ENCODE measurements at regions of chr20 and their contacts with region 1.

Region 1: DNA sequence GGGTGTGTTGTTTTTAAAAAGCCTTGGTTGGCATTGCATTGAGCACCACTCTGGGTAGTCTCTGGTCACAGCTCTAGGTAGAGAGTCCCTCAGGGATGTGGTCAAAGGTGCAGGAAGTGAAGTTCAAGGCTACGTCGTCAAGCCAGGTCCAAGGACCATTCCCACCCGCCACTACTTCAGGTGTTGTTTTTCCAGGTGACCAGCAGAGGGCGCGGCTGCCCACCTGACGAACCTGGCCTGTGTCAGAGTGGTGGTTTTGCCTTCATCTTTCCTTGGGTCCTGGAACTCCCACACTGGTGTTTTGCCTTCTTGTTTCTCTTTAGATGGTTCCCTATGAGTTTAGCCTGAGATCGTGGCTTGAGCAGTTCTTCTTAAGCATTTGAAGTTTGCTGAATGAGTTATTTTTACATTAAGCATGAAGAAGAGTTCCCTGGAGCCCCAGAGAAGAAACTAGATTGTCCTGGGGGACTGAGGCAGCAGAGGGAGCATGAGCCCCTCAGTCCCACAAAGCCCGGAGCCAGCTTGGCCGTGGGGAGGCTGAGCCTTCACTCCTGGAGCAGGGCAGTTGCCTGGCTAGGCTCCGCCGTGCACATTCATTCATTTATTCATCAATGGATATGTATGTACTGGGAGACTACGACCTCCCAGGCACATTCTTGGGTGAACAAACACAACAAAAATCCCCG is 5.6 kb upstream of the PHACTR3 start:
- DNase-seq: peak; percentile 48
- H3K4me3 Mint-ChIP-seq: no peak overlapping the region
- H3K27ac Mint-ChIP-seq: no peak overlapping the region
- H3K4me1 Mint-ChIP-seq: no peaks in the 10 kb centered on the region
- H3K27me3 Mint-ChIP-seq: peaks cover 41% of the 10 kb centered on the region

Region 2: DNA sequence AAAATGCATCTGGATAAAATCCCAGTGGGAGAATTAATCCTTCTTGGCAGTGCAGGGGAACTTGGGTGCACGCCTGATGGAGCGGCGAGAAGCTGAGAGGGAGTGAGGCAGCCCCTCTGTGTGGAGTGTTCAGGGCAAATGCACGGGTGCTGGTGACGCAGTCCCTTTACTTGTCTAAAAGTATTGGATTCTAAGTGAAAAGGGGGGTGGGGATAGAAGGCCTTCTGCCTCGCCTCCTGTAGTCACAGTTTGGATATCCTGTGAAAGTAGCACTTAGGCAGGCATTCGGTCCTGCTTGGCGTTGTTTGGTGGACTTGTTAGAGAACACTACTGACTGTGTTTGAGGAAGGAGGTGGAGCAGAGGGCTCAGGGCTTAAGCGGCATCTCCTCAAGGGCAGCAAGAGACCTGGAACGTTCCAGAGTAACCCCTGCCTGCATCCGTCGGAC is 44.9 kb after region 1 on chr20:
- CTCF ChIA-PET with region 1: no interaction called
- POLR2A ChIA-PET with region 1: no interaction called
- intact Hi-C with region 1: no loop called
- DNase-seq: no peak
- H3K4me3 Mint-ChIP-seq: no peak overlapping the region
- H3K27ac Mint-ChIP-seq: no peak overlapping the region
- H3K4me1 Mint-ChIP-seq: no peaks in the 10 kb centered on the region
- H3K27me3 Mint-ChIP-seq: no peaks in the 10 kb centered on the region

Region 3: DNA sequence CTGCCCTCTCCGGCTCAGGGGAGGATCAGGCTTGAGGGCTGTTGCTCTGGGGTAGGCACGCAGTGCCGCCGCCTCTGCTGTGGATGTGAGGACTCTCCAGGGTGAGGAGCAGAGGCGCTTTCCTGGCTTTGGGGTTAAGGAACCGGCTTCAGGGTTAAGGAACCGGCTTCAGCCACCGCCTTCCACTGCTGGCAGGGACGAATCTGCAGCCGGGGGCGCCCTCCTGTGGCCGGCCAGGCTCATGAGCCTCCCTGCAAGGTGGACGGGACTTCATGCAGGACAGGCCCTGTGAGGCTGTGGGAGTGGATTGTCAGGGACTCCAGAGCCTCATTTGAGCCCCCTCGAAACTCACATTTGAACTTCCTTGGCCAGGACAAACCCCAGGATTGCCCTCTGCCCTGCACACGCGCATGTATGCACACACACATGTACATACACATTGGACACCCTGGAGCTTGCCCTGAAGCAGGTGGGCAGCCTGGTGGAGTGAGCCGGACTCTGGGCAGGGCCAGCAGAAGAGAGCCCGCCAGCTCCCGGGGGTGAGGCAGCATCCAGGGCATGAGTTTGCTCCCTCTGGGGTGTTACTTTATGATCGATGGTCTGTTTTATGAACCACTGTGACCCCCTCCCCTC is 152.4 kb after region 1 on chr20:
- CTCF ChIA-PET with region 1: interaction called, 3 read pairs
- POLR2A ChIA-PET with region 1: no interaction called
- intact Hi-C with region 1: loop called (anchors 2 kb)
- DNase-seq: peak; percentile 58
- H3K4me3 Mint-ChIP-seq: no peak overlapping the region
- H3K27ac Mint-ChIP-seq: no peak overlapping the region
- H3K4me1 Mint-ChIP-seq: no peaks in the 10 kb centered on the region
- H3K27me3 Mint-ChIP-seq: peaks cover 6% of the 10 kb centered on the region